ENCODE measurements at regions of chr7 and their contacts with region 1.

Region 1: GRCh38 chr7:92809397-92810241 is 26.8 kb downstream of the CDK6 start:
- DNase-seq: peak; percentile 75
- ATAC-seq: peak; percentile 56
- H3K4me3 Mint-ChIP-seq: peak overlapping the region; percentile 50
- H3K27ac Mint-ChIP-seq: peak overlapping the region; percentile 83
- H3K4me1 Mint-ChIP-seq: peaks cover 81% of the 10 kb centered on the region
- H3K27me3 Mint-ChIP-seq: no peaks in the 10 kb centered on the region

Region 2: DNA sequence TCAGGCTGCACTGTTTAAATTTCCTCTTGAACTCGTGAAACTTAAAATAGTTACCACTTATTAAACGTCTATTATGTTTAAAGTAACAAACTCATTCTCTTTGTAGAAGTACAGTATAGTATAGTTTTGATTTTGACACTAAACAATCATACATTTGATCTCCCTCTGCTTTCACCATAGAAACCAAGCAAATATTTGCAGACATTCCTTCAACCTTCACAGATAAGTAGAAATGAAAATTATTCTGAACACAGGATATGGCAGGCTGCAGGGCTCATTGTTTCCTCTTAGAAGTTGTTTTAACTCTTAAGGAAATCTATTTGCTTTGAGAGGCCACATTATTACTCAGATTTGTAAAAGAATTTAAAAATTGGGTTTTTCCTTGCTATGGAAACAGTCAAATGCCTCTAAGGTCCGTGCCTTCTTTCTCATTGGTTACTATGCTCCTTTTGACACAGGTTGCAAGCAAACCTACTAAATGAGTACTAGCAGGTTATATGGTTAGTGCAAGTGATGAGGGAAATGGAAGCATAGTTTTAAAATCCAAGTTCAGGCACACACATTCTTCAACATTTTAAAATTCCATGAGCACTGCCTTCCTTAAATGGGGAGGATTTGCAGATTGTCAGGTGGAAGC is 126.6 kb before region 1 on chr7:
- CTCF ChIA-PET with region 1: no interaction called
- POLR2A ChIA-PET with region 1: no interaction called
- intact Hi-C with region 1: loop called (anchors 1 to 2 kb)
- DNase-seq: no peak
- ATAC-seq: peak; percentile 53
- H3K4me3 Mint-ChIP-seq: peak overlapping the region; percentile 39
- H3K27ac Mint-ChIP-seq: peak overlapping the region; percentile 88
- H3K4me1 Mint-ChIP-seq: peaks cover 83% of the 10 kb centered on the region
- H3K27me3 Mint-ChIP-seq: no peaks in the 10 kb centered on the region

Region 3: DNA sequence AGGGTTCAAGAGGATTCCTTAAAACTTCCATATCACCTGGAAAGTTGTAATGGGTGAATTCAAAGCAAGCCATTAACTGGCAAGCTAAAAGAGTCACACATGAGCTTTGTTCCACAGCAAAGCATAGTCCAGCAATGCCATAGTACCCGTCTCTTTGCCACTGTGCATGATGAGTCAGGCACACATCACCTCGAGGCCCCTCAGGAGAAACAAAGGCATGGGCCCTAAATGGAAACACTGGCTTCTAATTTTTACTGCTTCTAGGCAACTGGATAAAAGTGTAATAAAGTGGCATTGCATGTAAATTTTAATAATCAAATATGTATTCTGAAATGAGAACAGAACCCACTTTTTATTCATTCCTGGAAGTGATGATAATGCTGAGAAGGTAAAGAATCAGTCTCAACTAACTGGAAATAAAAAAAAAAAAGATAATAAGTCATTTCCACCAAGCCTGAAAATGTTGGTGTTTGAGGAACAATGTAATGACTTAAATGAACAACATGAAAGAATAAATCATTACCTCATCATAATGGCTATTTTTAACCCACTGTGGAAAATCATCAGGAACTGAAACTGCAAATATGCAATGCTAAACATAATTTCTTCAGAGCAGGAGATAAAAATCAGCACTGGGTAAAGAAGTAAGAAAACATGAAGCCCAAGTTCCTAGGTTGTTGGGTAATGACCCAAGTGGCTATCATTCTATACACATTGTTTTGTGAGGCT is 78.1 kb before region 1 on chr7:
- CTCF ChIA-PET with region 1: interaction called, 3 read pairs
- POLR2A ChIA-PET with region 1: interaction called, 10 read pairs
- intact Hi-C with region 1: loop called (anchors 1 kb)
- DNase-seq: peak; percentile 68
- ATAC-seq: peak; percentile 72
- H3K4me3 Mint-ChIP-seq: peak overlapping the region; percentile 21
- H3K27ac Mint-ChIP-seq: peak overlapping the region; percentile 88
- H3K4me1 Mint-ChIP-seq: peaks cover 61% of the 10 kb centered on the region
- H3K27me3 Mint-ChIP-seq: no peaks in the 10 kb centered on the region

Region 4: GRCh38 chr7:92797693-92798092 is 11.9 kb before region 1 on chr7:
- CTCF ChIA-PET with region 1: interaction called, 8 read pairs
- POLR2A ChIA-PET with region 1: interaction called, 4 read pairs
- intact Hi-C with region 1: loop called (anchors 1 kb)
- DNase-seq: peak; percentile 50
- ATAC-seq: peak; percentile 81
- H3K4me3 Mint-ChIP-seq: no peak overlapping the region
- H3K27ac Mint-ChIP-seq: no peak overlapping the region
- H3K4me1 Mint-ChIP-seq: peaks cover 34% of the 10 kb centered on the region
- H3K27me3 Mint-ChIP-seq: no peaks in the 10 kb centered on the region

Region 5: GRCh38 chr7:92854501-92855238 is 45.1 kb after region 1 on chr7:
- CTCF ChIA-PET with region 1: no interaction called
- POLR2A ChIA-PET with region 1: no interaction called
- intact Hi-C with region 1: loop called in 1 of 2 experiments (anchors 2 kb)
- DNase-seq: peak; percentile 47
- ATAC-seq: peak; percentile 91
- H3K4me3 Mint-ChIP-seq: no peak overlapping the region
- H3K27ac Mint-ChIP-seq: peak overlapping the region; percentile 69
- H3K4me1 Mint-ChIP-seq: peaks cover 16% of the 10 kb centered on the region
- H3K27me3 Mint-ChIP-seq: peaks cover 6% of the 10 kb centered on the region

Measured in activated CD4-positive, alpha-beta T cell treated with anti-CD3 and anti-CD28 coated beads for 36 hours (primary cell).